CD4-positive, alpha-beta memory T cell (primary cell): ENCODE measurements at regions of chr5 and their contacts with region 1.

Region 1: DNA sequence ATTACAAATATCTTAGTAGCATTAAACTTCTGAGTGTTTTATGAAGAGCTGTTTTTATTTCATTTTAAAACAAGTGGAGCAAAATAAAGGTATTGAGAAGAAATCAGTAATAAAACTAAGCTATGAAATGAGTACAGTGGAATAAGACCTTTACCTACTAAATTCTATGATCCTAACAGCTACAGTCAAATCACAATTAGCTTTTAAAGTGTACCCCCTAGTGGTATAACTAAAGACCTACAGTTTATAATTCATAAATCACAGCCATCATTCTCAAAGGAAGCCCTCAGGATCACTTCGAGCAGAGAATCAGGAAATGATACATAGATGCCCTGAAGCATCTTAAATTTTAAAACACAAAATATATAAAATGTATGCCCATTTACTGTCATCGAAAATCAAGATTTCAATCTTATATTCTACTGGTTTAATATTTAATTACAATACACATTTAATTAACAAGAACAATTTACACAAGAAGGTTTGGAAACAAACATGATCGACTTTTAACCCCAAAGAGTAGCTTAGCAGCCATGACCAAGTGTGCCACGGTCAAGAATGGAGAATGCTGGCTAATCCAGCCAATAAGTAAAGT is 12.3 kb downstream of the CCNH start:
- DNase-seq: peak in 4 of 5 donors; percentile 50 to 59 (median 55)
- H3K4me3 ChIP-seq: no peak overlapping the region
- H3K4me3 Mint-ChIP-seq: peak overlapping the region in 2 of 8 donors; percentile 21 to 60
- H3K27ac ChIP-seq: peak overlapping the region; percentile 5
- H3K27ac Mint-ChIP-seq: peak overlapping the region in 5 of 7 donors; percentile 12 to 64 (median 62)
- H3K4me1 ChIP-seq: peaks cover 24% of the 10 kb centered on the region
- H3K4me1 Mint-ChIP-seq: peaks cover 17 to 58% (median 29%) of the 10 kb centered on the region in 4 donors
- H3K27me3 ChIP-seq: no peaks in the 10 kb centered on the region
- H3K27me3 Mint-ChIP-seq: no peaks in the 10 kb centered on the region

Region 2: GRCh38 chr5:86880785-86881492 is 519.5 kb before region 1 on chr5:
- CTCF ChIA-PET with region 1: interaction called, 8 read pairs
- POLR2A ChIA-PET with region 1: no interaction called
- intact Hi-C with region 1: loop called (anchors 1 kb)
- DNase-seq: peak; percentile 37 to 50 (median 45)
- H3K4me3 ChIP-seq: no peak overlapping the region
- H3K4me3 Mint-ChIP-seq: no peak overlapping the region
- H3K27ac ChIP-seq: no peak overlapping the region
- H3K27ac Mint-ChIP-seq: peak overlapping the region in 1 of 7 donors; percentile 13
- H3K4me1 ChIP-seq: no peaks in the 10 kb centered on the region
- H3K4me1 Mint-ChIP-seq: peaks cover 0 to 1% (median 0%) of the 10 kb centered on the region in 4 donors
- H3K27me3 ChIP-seq: no peaks in the 10 kb centered on the region
- H3K27me3 Mint-ChIP-seq: no peaks in the 10 kb centered on the region

Region 3: GRCh38 chr5:86986837-86987236 is 413.6 kb before region 1 on chr5:
- CTCF ChIA-PET with region 1: interaction called, 20 read pairs
- POLR2A ChIA-PET with region 1: no interaction called
- intact Hi-C with region 1: loop called (anchors 1 kb)
- DNase-seq: peak in 1 of 5 donors; percentile 12
- H3K4me3 ChIP-seq: no peak overlapping the region
- H3K4me3 Mint-ChIP-seq: no peak overlapping the region
- H3K27ac ChIP-seq: no peak overlapping the region
- H3K27ac Mint-ChIP-seq: no peak overlapping the region
- H3K4me1 ChIP-seq: no peaks in the 10 kb centered on the region
- H3K4me1 Mint-ChIP-seq: no peaks in the 10 kb centered on the region
- H3K27me3 ChIP-seq: no peaks in the 10 kb centered on the region
- H3K27me3 Mint-ChIP-seq: no peaks in the 10 kb centered on the region

Region 4: GRCh38 chr5:87383216-87383615 is 17.2 kb before region 1 on chr5:
- CTCF ChIA-PET with region 1: interaction called, 11 read pairs
- POLR2A ChIA-PET with region 1: no interaction called
- intact Hi-C with region 1: no loop called
- DNase-seq: no peak
- H3K4me3 ChIP-seq: no peak overlapping the region
- H3K4me3 Mint-ChIP-seq: no peak overlapping the region
- H3K27ac ChIP-seq: no peak overlapping the region
- H3K27ac Mint-ChIP-seq: no peak overlapping the region
- H3K4me1 ChIP-seq: no peaks in the 10 kb centered on the region
- H3K4me1 Mint-ChIP-seq: peaks cover 4 to 18% (median 12%) of the 10 kb centered on the region in 4 donors
- H3K27me3 ChIP-seq: no peaks in the 10 kb centered on the region
- H3K27me3 Mint-ChIP-seq: no peaks in the 10 kb centered on the region

Region 5: GRCh38 chr5:87412630-87413342 is 12.4 kb after region 1 on chr5 and contains the start of gene CCNH:
- CTCF ChIA-PET with region 1: interaction called, 22 read pairs
- POLR2A ChIA-PET with region 1: interaction called, 8 read pairs
- intact Hi-C with region 1: no loop called
- DNase-seq: peak; percentile 94 to 98 (median 97)
- H3K4me3 ChIP-seq: peak within 1 kb of the TSS; percentile 92 to 96
- H3K4me3 Mint-ChIP-seq: peak within 1 kb of the TSS; percentile 94 to 99 (median 98)
- H3K27ac ChIP-seq: peak within 1 kb of the TSS; percentile 100
- H3K27ac Mint-ChIP-seq: peak within 1 kb of the TSS; percentile 88 to 100 (median 99)
- H3K4me1 ChIP-seq: peaks cover 46% of the 10 kb centered on the region
- H3K4me1 Mint-ChIP-seq: peaks cover 38 to 54% (median 42%) of the 10 kb centered on the region in 4 donors
- H3K27me3 ChIP-seq: no peaks in the 10 kb centered on the region
- H3K27me3 Mint-ChIP-seq: no peaks in the 10 kb centered on the region
- total RNA-seq, gene CCNH: 93.9 to 98.6 TPM